GM12878 (cell line): ENCODE measurements at regions of chr16 and their contacts with region 1.

Region 1: GRCh38 chr16:81715358-81716196 is 63.5 kb upstream of the PLCG2 start:
- DNase-seq: peak; percentile 77
- ATAC-seq: peak; percentile 72
- H3K4me3 ChIP-seq: peak overlapping the region; percentile 64
- H3K27ac ChIP-seq: peak overlapping the region; percentile 75
- H3K4me1 ChIP-seq: peaks cover 34% of the 10 kb centered on the region
- H3K27me3 ChIP-seq: no peaks in the 10 kb centered on the region
- CTCF ChIP-seq: no peak
- EP300 ChIP-seq: peak; percentile 69 to 86
- POLR2A ChIP-seq: no peak
- RAD21 ChIP-seq: no peak

Region 2: GRCh38 chr16:81497690-81498089 is 217.9 kb before region 1 on chr16:
- CTCF ChIA-PET with region 1: no interaction called
- POLR2A ChIA-PET with region 1: no interaction called
- RAD21 ChIA-PET with region 1: no interaction called
- SMC1A ChIA-PET with region 1: interaction called, 3 read pairs
- in situ Hi-C with region 1: no loop called
- intact Hi-C with region 1: loop called (anchors 5 kb)
- DNase-seq: no peak
- ATAC-seq: peak; percentile 78
- H3K4me3 ChIP-seq: no peak overlapping the region
- H3K27ac ChIP-seq: peak overlapping the region; percentile 39
- H3K4me1 ChIP-seq: peaks cover 14% of the 10 kb centered on the region
- H3K27me3 ChIP-seq: no peaks in the 10 kb centered on the region
- CTCF ChIP-seq: peak in 2 of 3 experiments; percentile 12 to 22; a peak in 1 of 6 replicates
- EP300 ChIP-seq: no peak
- POLR2A ChIP-seq: no peak
- RAD21 ChIP-seq: no peak

Region 3: DNA sequence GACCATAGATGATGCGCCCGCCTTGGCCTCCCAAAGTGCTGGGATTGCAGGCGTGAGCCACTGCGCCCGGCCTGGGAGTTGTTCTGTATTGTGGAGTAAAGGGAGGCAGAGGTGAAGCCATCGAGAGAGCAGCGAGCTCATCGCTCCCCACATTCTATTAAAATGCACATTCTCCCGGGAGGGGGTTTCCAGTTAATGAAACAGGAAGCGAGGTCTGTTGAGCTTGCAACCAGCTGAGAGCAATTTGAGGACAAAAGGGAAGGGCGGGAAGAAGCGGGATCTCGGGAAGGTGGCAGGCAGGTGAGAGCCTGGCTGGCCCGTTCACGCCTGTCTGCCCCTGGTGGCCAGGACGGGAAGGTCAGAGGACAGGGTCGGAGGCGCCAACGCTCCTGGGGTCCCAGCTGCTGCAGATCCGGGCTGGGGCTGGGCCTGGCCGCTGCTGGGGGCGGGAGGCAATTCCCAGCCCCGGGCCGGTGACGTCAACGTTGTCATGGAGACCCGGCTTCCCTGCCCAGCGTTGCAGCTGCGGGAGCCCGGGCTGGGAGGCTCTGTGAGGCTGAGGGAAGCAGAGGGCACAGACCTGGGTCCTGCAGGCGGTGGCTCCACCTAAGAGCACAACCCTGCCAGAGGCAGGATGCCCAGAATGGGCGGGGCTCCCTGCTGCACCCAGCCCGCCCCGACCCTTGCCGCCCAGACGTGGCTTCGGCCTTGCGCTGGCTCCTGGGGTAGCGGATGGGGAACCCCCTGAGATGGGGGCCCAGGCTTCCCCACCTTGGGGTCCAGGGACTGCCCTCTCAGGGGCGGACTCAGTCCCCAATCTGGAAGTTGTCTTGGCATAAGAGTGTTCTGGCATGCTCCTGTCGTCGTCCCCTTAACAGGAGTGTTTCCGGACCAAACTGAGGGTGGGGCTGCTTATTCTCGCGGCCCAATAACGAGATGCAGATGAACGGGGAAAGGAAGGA is 14.8 kb after region 1 on chr16:
- CTCF ChIA-PET with region 1: interaction called, 13 read pairs
- POLR2A ChIA-PET with region 1: interaction called, 7 read pairs
- RAD21 ChIA-PET with region 1: interaction called, 15 read pairs
- SMC1A ChIA-PET with region 1: interaction called, 8 read pairs
- in situ Hi-C with region 1: no loop called
- intact Hi-C with region 1: no loop called
- DNase-seq: no peak
- ATAC-seq: peak; percentile 93
- H3K4me3 ChIP-seq: peak overlapping the region; percentile 52
- H3K27ac ChIP-seq: peak overlapping the region; percentile 60
- H3K4me1 ChIP-seq: peaks cover 12% of the 10 kb centered on the region
- H3K27me3 ChIP-seq: no peaks in the 10 kb centered on the region
- CTCF ChIP-seq: peak; percentile 49 to 78 (median 74)
- EP300 ChIP-seq: no peak
- POLR2A ChIP-seq: no peak
- RAD21 ChIP-seq: no peak

Region 4: GRCh38 chr16:81987706-81988105 is 272.1 kb after region 1 on chr16:
- CTCF ChIA-PET with region 1: no interaction called
- POLR2A ChIA-PET with region 1: no interaction called
- RAD21 ChIA-PET with region 1: no interaction called
- SMC1A ChIA-PET with region 1: no interaction called
- in situ Hi-C with region 1: no loop called
- intact Hi-C with region 1: no loop called
- DNase-seq: no peak
- ATAC-seq: no peak
- H3K4me3 ChIP-seq: no peak overlapping the region
- H3K27ac ChIP-seq: no peak overlapping the region
- H3K4me1 ChIP-seq: no peaks in the 10 kb centered on the region
- H3K27me3 ChIP-seq: 0 out of 4 replicates have a peak, but pooled peaks cover 0 to 2% of the 10 kb centered on the region in 2 experiments
- CTCF ChIP-seq: no peak
- EP300 ChIP-seq: no peak
- POLR2A ChIP-seq: no peak
- RAD21 ChIP-seq: no peak